ENCODE measurements at regions of chr10 and their contacts with region 1.

Region 1: GRCh38 chr10:78657163-78657861 is 411.5 kb upstream of the ZMIZ1 start:
- DNase-seq: peak; percentile 75 to 91 (median 84)
- H3K4me3 ChIP-seq: no peak overlapping the region
- H3K27ac ChIP-seq: no peak overlapping the region
- H3K4me1 ChIP-seq: no peaks in the 10 kb centered on the region
- H3K27me3 ChIP-seq: no peaks in the 10 kb centered on the region
- CTCF ChIP-seq: peak; percentile 57 to 82 (median 66)
- POLR2A ChIP-seq: no peak

Region 2: GRCh38 chr10:78047314-78047891 is 609.9 kb before region 1 on chr10:
- intact Hi-C with region 1: loop called (anchors 5 to 10 kb)
- DNase-seq: peak; percentile 82 to 97 (median 90)
- H3K4me3 ChIP-seq: no peak overlapping the region
- H3K27ac ChIP-seq: no peak overlapping the region
- H3K4me1 ChIP-seq: peaks cover 0 to 13% of the 10 kb centered on the region in 2 donors
- H3K27me3 ChIP-seq: no peaks in the 10 kb centered on the region
- CTCF ChIP-seq: peak; percentile 84 to 92 (median 90)
- POLR2A ChIP-seq: no peak

Region 3: DNA sequence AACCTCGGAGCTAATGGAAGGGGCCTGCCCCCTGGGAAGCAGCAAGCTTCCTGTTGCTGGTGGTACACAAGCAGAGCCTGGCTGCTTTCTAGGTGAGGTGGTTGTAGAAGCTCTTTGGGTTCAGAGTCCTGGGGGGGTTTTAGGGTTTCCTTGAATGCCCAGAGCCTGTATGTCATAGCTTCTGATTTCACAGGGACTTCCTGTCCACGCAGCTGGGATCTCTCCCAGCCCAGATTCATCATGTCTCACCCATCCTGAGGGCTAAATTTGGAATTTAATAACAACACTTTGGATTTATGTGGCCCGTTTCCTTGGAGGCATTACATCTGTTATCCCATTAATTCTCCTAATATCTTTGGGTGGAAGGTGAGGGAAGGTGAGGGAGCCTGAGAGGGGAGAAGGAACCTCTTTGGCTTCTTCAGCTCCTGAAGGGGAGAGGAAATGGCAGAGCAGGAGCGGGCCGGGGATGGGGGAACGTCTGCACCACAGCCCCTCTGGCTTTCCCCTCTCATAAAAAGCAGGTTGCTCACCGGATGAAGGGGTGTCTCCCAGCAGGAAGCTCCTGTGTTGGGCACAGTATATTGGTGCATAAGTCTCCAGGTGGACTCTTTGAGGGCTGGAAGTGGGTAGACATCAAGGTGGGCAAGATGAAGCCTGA is 604.0 kb before region 1 on chr10:
- intact Hi-C with region 1: loop called (anchors 5 to 10 kb)
- DNase-seq: peak in 1 of 7 donors; percentile 57
- H3K4me3 ChIP-seq: no peak overlapping the region
- H3K27ac ChIP-seq: no peak overlapping the region
- H3K4me1 ChIP-seq: no peaks in the 10 kb centered on the region
- H3K27me3 ChIP-seq: no peaks in the 10 kb centered on the region
- CTCF ChIP-seq: no peak
- POLR2A ChIP-seq: no peak

Region 4: DNA sequence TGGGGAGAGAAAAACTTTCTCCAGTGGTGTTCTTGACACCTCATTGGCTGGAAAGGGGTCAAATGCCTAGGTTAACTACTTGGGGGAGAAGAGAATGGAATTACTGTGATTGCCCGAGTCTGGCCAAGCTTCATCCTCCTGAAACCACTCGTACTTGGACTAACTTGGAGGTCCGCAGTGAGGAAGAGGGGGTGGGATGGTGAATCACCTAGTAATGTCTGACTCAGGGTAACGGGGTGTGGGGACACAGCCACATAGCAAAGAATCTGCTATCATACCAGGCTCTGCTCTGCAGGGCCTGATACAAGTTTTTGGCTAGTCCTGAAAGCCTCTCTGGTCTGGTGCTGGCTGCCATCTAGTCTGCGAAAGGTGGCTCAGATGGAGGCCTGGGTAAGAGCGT is 432.7 kb before region 1 on chr10:
- intact Hi-C with region 1: loop called (anchors 10 kb)
- DNase-seq: no peak
- H3K4me3 ChIP-seq: no peak overlapping the region
- H3K27ac ChIP-seq: no peak overlapping the region
- H3K4me1 ChIP-seq: no peaks in the 10 kb centered on the region
- H3K27me3 ChIP-seq: no peaks in the 10 kb centered on the region
- CTCF ChIP-seq: no peak
- POLR2A ChIP-seq: no peak

Region 5: DNA sequence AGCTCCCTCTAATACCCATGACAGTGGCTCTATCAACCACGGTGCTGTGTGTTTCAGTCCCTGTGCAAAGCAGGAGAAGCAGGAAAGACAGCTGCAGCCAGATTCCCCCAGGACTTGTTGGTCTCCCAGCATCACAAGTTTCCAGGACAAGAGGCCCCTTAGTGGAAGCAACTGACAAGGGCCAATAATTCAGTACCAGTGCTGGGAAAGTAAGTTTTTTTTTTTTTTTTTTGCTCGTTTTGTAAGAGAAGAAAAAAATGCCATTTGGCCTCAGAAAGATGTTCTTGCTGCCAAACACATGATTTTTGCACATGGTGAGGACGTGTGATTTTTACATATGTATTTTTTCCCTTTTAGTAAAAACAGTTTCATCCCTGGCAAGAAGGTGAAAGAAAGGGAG is 127.2 kb after region 1 on chr10:
- intact Hi-C with region 1: no loop called
- DNase-seq: no peak
- H3K4me3 ChIP-seq: no peak overlapping the region
- H3K27ac ChIP-seq: no peak overlapping the region
- H3K4me1 ChIP-seq: no peaks in the 10 kb centered on the region
- H3K27me3 ChIP-seq: no peaks in the 10 kb centered on the region
- CTCF ChIP-seq: no peak
- POLR2A ChIP-seq: no peak

Region 6: GRCh38 chr10:78905957-78906308 is 248.6 kb after region 1 on chr10:
- intact Hi-C with region 1: no loop called
- DNase-seq: peak in 3 of 7 donors; percentile 9 to 15 (median 10)
- H3K4me3 ChIP-seq: no peak overlapping the region
- H3K27ac ChIP-seq: no peak overlapping the region
- H3K4me1 ChIP-seq: peaks cover 0 to 9% of the 10 kb centered on the region in 2 donors
- H3K27me3 ChIP-seq: no peaks in the 10 kb centered on the region
- CTCF ChIP-seq: no peak
- POLR2A ChIP-seq: no peak